CD4-positive, alpha-beta T cell (primary cell): ENCODE measurements at regions of chr2 and their contacts with region 1.

Region 1: DNA sequence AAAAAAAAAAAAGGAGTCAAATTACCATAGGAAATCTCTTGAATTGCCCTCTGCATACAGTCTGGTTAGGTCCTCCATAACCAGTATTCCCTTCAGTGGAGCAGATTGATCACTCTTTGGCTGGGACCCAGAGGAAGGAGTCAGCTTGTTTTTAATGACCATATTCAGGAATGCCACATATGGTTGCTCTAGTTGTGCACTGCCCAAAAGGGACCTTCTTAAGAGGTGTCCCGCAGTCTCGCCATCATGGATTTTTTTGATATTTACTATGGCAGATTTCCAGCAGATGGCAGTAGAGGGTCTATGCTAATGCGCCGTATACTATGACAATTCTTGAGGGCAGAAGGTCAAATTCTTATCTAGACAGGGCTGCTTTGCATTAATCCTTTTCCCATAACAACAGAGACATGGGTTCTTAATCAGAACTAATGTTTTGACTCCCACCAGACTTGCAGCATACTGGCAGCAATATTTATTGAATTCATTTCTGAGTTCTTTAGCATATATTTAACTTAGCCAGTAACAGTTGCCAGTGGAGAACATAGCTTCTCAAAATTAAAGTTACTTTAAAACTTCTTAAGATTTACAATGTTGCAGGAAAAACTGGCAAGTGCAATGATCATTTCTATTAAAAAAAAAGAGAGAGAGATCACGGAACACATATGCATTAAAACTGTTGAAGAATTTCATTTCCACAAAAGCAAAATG is 31.8 kb upstream of the INPP4A start:
- DNase-seq: peak in 13 of 14 experiments; percentile 5 to 88 (median 41)
- ATAC-seq: peak; percentile 92
- H3K4me3 ChIP-seq: no peak overlapping the region
- H3K4me3 Mint-ChIP-seq: no peak overlapping the region
- H3K27ac ChIP-seq: no peak overlapping the region
- H3K27ac Mint-ChIP-seq: no peak overlapping the region
- H3K4me1 ChIP-seq: peaks cover 9% of the 10 kb centered on the region
- H3K4me1 Mint-ChIP-seq: peaks cover 6% of the 10 kb centered on the region
- H3K27me3 ChIP-seq: no peaks in the 10 kb centered on the region
- H3K27me3 Mint-ChIP-seq: no peaks in the 10 kb centered on the region
- CTCF ChIP-seq: peak; percentile 82

Region 2: DNA sequence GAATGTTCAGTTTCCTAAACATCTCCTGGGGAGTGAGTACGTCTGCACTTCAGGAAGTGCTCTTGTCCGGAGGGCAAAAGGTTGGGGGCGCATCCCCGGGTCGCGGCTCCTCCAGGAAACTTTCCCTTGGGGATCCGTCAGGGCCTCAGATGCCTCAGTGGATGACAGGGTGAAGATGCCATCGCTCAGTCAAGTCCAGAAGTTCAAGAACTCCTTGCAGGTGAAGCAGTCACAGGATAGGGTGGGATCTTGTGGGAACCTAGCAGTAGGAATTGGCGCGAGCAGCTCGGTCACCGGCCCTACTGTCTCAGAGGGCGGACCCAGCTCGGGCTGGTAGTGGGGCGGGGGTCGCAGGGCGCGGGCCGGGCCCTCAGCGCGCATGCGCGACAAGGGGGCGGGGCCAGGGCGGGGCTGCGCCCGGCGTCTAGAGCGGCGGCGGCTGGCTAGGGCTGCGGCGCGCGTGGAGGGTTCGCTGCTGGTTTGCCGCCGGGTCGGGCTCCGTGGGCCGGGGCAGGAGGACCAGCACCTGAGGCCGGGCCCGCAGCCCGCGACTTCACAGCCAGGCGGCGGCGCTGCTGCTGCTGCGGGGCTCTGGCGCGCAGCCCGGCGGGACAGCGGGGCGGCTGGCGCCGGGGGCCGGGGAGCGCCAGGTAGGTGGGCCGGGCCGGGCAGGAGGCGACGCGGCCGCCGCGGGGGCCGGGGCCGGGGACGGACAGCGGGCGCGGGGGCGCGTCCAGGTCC is 31.7 kb after region 1 on chr2 and contains the start of gene INPP4A:
- CTCF ChIA-PET with region 1: interaction called, 3 read pairs
- POLR2A ChIA-PET with region 1: interaction called, 3 read pairs
- intact Hi-C with region 1: loop called in 1 of 2 experiments (anchors 5 kb)
- DNase-seq: peak; percentile 67 to 93 (median 77)
- ATAC-seq: peak; percentile 64
- H3K4me3 ChIP-seq: peak within 1 kb of the TSS; percentile 94
- H3K4me3 Mint-ChIP-seq: peak within 1 kb of the TSS; percentile 96
- H3K27ac ChIP-seq: peak within 1 kb of the TSS; percentile 53 to 72
- H3K27ac Mint-ChIP-seq: peak within 1 kb of the TSS; percentile 90
- H3K4me1 ChIP-seq: peaks cover 25% of the 10 kb centered on the region
- H3K4me1 Mint-ChIP-seq: peaks cover 52% of the 10 kb centered on the region
- H3K27me3 ChIP-seq: no peaks in the 10 kb centered on the region
- H3K27me3 Mint-ChIP-seq: no peaks in the 10 kb centered on the region
- CTCF ChIP-seq: no peak
- total RNA-seq, gene INPP4A: 86.4 to 89.2 TPM

Region 3: DNA sequence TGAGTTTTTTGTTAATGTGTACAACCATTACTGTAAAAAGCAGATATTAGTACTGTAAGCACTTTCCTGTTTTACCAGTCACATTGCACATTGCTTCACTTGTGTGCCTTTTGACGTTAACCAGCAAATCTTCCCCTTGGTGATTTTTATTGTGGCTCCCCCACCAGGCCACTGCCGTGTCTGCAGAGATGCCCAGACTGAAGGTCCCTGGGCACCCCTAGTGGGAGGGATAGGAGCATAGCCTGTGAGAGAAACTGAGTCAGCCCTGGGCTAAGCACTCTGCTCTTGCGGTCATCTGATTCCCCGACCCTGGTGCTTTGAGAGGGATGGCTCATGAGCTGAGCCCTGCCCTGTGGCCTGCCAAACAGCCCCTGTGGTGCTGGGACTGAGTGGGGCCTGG is 105.2 kb after region 1 on chr2:
- CTCF ChIA-PET with region 1: interaction called, 7 read pairs
- POLR2A ChIA-PET with region 1: interaction called, 3 read pairs
- intact Hi-C with region 1: loop called (anchors 1 kb)
- DNase-seq: peak; percentile 36 to 81 (median 58)
- ATAC-seq: peak; percentile 94
- H3K4me3 ChIP-seq: no peak overlapping the region
- H3K4me3 Mint-ChIP-seq: no peak overlapping the region
- H3K27ac ChIP-seq: no peak overlapping the region
- H3K27ac Mint-ChIP-seq: peak overlapping the region; percentile 61
- H3K4me1 ChIP-seq: peaks cover 46% of the 10 kb centered on the region
- H3K4me1 Mint-ChIP-seq: peaks cover 63% of the 10 kb centered on the region
- H3K27me3 ChIP-seq: no peaks in the 10 kb centered on the region
- H3K27me3 Mint-ChIP-seq: no peaks in the 10 kb centered on the region
- CTCF ChIP-seq: peak; percentile 87

Region 4: DNA sequence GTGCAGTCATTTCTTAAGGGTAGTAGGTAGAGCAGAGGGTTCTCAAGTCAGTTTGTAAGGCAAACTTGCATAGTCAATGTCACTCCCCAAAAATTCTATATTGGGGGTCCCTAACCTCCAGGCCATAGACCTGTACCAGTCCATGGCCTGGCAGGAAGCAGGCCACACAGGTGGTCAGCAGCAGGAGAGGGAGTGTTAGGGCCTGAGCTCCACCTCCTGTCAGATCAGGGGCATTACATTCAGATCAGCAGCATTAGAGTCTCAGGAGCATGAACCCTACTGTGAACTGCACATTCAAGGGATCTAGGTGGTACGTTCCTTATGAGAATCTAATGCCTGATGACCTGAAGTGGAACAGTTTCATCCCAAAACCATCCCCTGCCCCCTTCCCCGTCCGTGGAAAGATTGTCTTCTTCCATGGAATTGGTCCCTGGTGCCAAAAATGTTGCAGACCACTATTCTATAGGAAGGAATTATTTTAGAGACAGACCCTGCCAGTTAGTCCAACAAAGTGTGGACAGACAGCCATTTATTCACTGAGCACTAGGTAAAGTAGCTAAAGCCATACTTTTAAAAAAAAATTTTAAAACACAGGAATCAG is 188.7 kb after region 1 on chr2:
- CTCF ChIA-PET with region 1: no interaction called
- POLR2A ChIA-PET with region 1: no interaction called
- intact Hi-C with region 1: loop called in 1 of 2 experiments (anchors 5 kb)
- DNase-seq: peak in 3 of 14 experiments; percentile 16 to 43 (median 28)
- ATAC-seq: no peak
- H3K4me3 ChIP-seq: no peak overlapping the region
- H3K4me3 Mint-ChIP-seq: peak overlapping the region; percentile 4
- H3K27ac ChIP-seq: no peak overlapping the region
- H3K27ac Mint-ChIP-seq: peak overlapping the region; percentile 79
- H3K4me1 ChIP-seq: peaks cover 12% of the 10 kb centered on the region
- H3K4me1 Mint-ChIP-seq: peaks cover 37% of the 10 kb centered on the region
- H3K27me3 ChIP-seq: no peaks in the 10 kb centered on the region
- H3K27me3 Mint-ChIP-seq: no peaks in the 10 kb centered on the region
- CTCF ChIP-seq: peak; percentile 30

Region 5: DNA sequence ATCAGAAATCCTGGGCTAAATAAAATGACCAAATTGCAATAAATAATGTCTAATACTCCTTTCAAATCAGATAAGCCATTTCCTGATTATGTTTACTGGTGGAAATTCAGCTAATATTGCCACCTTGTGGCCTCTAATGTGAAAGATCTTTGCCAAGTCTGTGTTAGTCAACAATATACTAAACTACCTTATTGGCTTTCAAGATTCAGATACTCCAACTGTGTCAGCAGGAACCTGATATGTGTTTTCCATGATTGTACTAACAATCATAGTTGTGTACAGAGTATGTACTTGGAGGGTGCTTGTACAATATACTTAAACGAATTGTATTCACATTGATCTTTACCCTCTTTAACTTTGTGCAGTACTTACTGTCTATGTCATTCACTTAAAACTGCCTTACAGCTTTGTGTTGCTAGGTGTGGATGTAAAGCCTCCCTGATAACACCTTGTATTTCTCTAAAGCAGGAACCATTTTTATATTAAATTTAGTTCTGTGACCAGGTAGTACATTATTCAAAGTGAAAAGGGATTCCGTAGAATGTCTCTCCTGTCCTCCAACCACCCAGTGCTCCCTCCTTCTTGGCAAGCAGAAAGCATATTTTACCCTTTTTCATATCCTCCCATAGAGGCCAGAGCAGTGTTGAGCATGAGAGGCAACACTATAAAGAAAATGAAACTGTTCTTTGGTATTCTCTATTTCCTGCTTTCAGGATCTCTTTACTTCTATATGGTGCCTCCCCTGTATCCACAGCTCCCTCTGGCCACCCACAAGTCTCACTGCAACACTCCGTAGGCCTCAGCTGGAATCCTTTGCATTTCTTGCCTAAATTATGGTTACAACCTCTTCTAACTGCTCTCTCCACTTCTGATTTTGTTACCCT is 653.4 kb after region 1 on chr2:
- CTCF ChIA-PET with region 1: no interaction called
- POLR2A ChIA-PET with region 1: no interaction called
- intact Hi-C with region 1: loop called in 1 of 2 experiments (anchors 5 kb)
- DNase-seq: peak in 7 of 14 experiments; percentile 3 to 76 (median 52)
- ATAC-seq: peak; percentile 89
- H3K4me3 ChIP-seq: no peak overlapping the region
- H3K4me3 Mint-ChIP-seq: no peak overlapping the region
- H3K27ac ChIP-seq: peak overlapping the region; percentile 43 to 72
- H3K27ac Mint-ChIP-seq: no peak overlapping the region
- H3K4me1 ChIP-seq: peaks cover 3% of the 10 kb centered on the region
- H3K4me1 Mint-ChIP-seq: peaks cover 5% of the 10 kb centered on the region
- H3K27me3 ChIP-seq: no peaks in the 10 kb centered on the region
- H3K27me3 Mint-ChIP-seq: no peaks in the 10 kb centered on the region
- CTCF ChIP-seq: peak; percentile 7